Activated CD4-positive, alpha-beta memory T cell treated with anti-CD3 and anti-CD28 coated beads, Interleukin-2, amount 10 ng/mL, durations not matched to agents 7 days and 5 days (primary cell): ENCODE measurements at regions of chr15 and their contacts with region 1.

Region 1: GRCh38 chr15:42207674-42208579 is at the start of gene VPS39:
- DNase-seq: peak; percentile 86
- H3K4me3 Mint-ChIP-seq: peak within 1 kb of the TSS; percentile 94
- H3K27ac Mint-ChIP-seq: peak within 1 kb of the TSS; percentile 84
- H3K4me1 Mint-ChIP-seq: peaks cover 27% of the 10 kb centered on the region
- H3K27me3 Mint-ChIP-seq: no peaks in the 10 kb centered on the region
- total RNA-seq, gene VPS39: 76.8 to 82.3 TPM

Region 2: GRCh38 chr15:42190370-42190769 is 17.6 kb before region 1 on chr15:
- CTCF ChIA-PET with region 1: no interaction called
- POLR2A ChIA-PET with region 1: interaction called, 11 read pairs
- DNase-seq: no peak
- H3K4me3 Mint-ChIP-seq: no peak overlapping the region
- H3K27ac Mint-ChIP-seq: peak overlapping the region; percentile 3
- H3K4me1 Mint-ChIP-seq: peaks cover 38% of the 10 kb centered on the region
- H3K27me3 Mint-ChIP-seq: no peaks in the 10 kb centered on the region

Region 3: GRCh38 chr15:42218953-42219592 is 11.1 kb after region 1 on chr15:
- CTCF ChIA-PET with region 1: no interaction called
- POLR2A ChIA-PET with region 1: interaction called, 18 read pairs
- DNase-seq: no peak
- H3K4me3 Mint-ChIP-seq: no peak overlapping the region
- H3K27ac Mint-ChIP-seq: no peak overlapping the region
- H3K4me1 Mint-ChIP-seq: peaks cover 7% of the 10 kb centered on the region
- H3K27me3 Mint-ChIP-seq: no peaks in the 10 kb centered on the region

Region 4: DNA sequence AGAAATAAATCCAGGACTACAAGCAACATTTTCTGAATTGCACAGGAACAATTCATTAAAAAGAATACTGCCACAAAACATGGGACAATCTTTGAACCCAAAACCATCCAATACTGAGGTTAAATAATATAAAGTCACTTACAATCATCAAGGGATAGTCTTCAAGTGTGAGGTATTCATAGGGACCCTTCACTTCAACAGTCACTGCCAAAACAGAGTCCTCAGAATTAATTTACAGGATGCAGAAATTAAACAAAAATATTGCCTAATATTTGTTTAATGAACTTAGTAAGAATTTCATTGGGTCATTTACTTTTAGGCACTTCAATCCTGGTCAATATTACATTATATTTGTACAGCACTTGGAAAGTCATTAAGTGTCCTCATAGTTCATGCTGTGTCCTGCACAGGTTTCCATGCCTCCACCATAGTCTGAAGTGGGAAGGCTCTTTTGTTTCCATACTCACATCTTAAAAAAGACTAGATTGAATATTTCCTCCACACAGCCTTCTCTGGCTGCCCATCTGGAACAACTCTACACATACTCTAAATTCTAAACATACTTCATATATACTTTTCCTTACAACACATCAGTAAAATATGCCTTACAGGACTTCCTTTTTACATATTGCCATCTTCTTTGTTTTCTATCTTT is 31.7 kb after region 1 on chr15:
- CTCF ChIA-PET with region 1: no interaction called
- POLR2A ChIA-PET with region 1: no interaction called
- DNase-seq: no peak
- H3K4me3 Mint-ChIP-seq: no peak overlapping the region
- H3K27ac Mint-ChIP-seq: no peak overlapping the region
- H3K4me1 Mint-ChIP-seq: peaks cover 16% of the 10 kb centered on the region
- H3K27me3 Mint-ChIP-seq: no peaks in the 10 kb centered on the region